H1 (cell line): ENCODE measurements at regions of chr16 and their contacts with region 1.

Region 1: DNA sequence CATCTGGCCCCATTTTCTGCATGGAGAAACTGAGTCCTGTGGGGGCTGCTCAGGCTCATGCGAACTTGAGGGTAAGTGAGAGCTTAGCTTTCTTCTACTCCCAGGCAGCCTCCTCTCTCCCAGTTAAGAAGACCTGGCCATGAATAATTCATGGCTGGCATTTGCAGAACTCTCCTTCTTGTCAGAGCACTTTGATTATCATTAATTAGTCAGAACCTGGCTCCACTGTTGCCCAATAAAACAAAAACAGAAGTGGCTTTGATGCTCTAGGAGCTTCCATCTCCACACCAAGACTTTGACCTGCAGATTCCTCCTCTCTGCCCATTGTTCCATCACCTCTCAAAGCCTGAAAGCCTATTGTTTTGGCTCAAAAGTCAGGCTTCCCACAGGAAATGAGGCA is 45.5 kb upstream of the CDH3 start:
- DNase-seq: no peak
- H3K4me3 ChIP-seq: no peak overlapping the region
- H3K27ac ChIP-seq: no peak overlapping the region
- H3K4me1 ChIP-seq: no peaks in the 10 kb centered on the region
- H3K27me3 ChIP-seq: no peaks in the 10 kb centered on the region
- CTCF ChIP-seq: no peak
- EP300 ChIP-seq: no peak
- POLR2A ChIP-seq: no peak
- RAD21 ChIP-seq: no peak

Region 2: GRCh38 chr16:68612996-68613395 is 13.4 kb after region 1 on chr16:
- CTCF ChIA-PET with region 1: interaction called, 15 read pairs
- POLR2A ChIA-PET with region 1: interaction called, 7 read pairs
- DNase-seq: no peak
- H3K4me3 ChIP-seq: no peak overlapping the region
- H3K27ac ChIP-seq: no peak overlapping the region
- H3K4me1 ChIP-seq: no peaks in the 10 kb centered on the region
- H3K27me3 ChIP-seq: no peaks in the 10 kb centered on the region
- CTCF ChIP-seq: no peak
- EP300 ChIP-seq: no peak
- POLR2A ChIP-seq: no peak
- RAD21 ChIP-seq: no peak